Activated CD4-positive, alpha-beta T cell treated with anti-CD3 and anti-CD28 coated beads, Interleukin-2, amount 10 ng/mL, durations not matched to agents 7 days and 5 days (primary cell): ENCODE measurements at regions of chr6 and their contacts with region 1.

Region 1: GRCh38 chr6:108222504-108222903 is 38.3 kb downstream of the SNX3 start:
- DNase-seq: no peak
- H3K4me3 Mint-ChIP-seq: no peak overlapping the region
- H3K27ac Mint-ChIP-seq: peak overlapping the region; percentile 70
- H3K4me1 Mint-ChIP-seq: peaks cover 17% of the 10 kb centered on the region
- H3K27me3 Mint-ChIP-seq: no peaks in the 10 kb centered on the region

Region 2: DNA sequence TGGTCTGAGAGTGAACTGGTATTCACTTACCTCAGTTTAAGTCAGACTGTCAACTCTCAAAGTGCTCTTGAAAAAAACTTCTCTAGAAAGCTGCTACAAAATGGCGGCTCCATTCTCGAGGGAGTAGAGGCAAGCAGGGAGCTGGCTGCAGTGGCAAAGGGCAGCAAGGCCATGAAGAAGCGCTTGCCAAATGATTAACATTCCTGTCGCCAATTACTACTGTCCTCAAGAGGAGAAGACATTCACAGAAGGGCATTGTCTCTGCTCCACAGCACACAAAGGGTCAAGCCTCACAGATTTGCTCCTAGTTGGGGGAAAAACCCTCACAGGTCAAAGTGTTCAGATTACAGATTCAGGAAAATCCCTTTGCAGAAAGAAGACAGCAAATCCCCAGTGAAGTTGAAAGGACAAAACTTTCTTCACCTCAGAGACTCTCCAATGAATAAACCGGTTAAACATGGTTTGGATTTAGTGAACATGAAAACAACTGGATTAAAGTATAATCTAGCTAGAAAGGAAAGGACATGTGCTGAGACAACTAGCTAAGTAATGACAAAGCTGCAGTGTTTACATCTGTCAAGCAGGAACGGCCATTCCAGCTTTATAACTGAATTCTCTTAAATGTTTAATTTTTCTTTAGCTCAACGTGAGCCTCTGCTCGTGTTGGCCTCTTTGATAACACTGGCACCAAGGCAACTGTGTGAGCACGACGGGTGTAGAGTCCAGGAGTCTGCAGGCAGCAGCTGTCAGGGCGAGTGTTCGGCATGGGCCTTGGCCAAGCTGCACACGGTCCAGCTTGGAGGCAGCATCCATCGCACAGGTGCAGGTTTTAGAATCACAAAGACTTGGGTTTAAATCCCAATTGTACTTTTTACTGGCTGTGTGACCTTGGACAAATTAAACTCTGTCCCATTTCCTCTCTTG is 19.1 kb before region 1 on chr6:
- CTCF ChIA-PET with region 1: no interaction called
- POLR2A ChIA-PET with region 1: interaction called, 10 read pairs
- DNase-seq: no peak
- H3K4me3 Mint-ChIP-seq: no peak overlapping the region
- H3K27ac Mint-ChIP-seq: no peak overlapping the region
- H3K4me1 Mint-ChIP-seq: no peaks in the 10 kb centered on the region
- H3K27me3 Mint-ChIP-seq: no peaks in the 10 kb centered on the region

Region 3: GRCh38 chr6:108251252-108251651 is 28.7 kb after region 1 on chr6:
- CTCF ChIA-PET with region 1: no interaction called
- POLR2A ChIA-PET with region 1: no interaction called
- DNase-seq: no peak
- H3K4me3 Mint-ChIP-seq: no peak overlapping the region
- H3K27ac Mint-ChIP-seq: no peak overlapping the region
- H3K4me1 Mint-ChIP-seq: peaks cover 28% of the 10 kb centered on the region
- H3K27me3 Mint-ChIP-seq: no peaks in the 10 kb centered on the region

Region 4: DNA sequence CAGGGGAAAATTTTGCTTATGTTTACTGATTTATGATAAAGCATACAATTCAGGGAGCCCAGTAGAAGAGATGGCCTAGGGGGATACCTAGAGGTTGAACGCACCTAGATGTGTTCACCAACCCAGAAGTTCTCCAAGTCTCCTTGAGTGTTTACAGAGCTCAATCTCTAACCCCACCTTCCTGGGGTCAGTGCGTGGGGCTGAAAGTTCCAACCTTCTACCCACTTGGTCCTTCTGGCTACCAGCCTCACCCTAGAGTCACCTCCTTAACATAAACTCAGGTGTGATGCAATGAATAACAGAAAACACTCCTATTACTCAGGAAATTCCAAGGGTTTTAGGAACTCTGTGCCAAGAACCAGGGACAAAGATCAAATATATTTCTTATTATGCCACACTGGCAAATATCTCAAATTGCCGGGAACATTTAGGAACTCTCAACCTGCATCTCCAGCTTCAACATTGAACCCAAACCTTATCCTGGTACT is 98.8 kb after region 1 on chr6:
- CTCF ChIA-PET with region 1: no interaction called
- POLR2A ChIA-PET with region 1: no interaction called
- DNase-seq: no peak
- H3K4me3 Mint-ChIP-seq: no peak overlapping the region
- H3K27ac Mint-ChIP-seq: no peak overlapping the region
- H3K4me1 Mint-ChIP-seq: no peaks in the 10 kb centered on the region
- H3K27me3 Mint-ChIP-seq: no peaks in the 10 kb centered on the region